CD14-positive monocyte (primary cell): ENCODE measurements at regions of chr18 and their contacts with region 1.

Region 1: GRCh38 chr18:3012964-3013804 is at the start of gene LPIN2:
- DNase-seq: peak; percentile 95 to 97 (median 96)
- H3K4me3 ChIP-seq: peak within 1 kb of the TSS; percentile 53 to 85 (median 73)
- H3K4me3 Mint-ChIP-seq: peak within 1 kb of the TSS; percentile 91 to 96
- H3K27ac ChIP-seq: peak within 1 kb of the TSS; percentile 76 to 88
- H3K27ac Mint-ChIP-seq: peak within 1 kb of the TSS; percentile 88 to 94 (median 93)
- H3K4me1 ChIP-seq: peaks cover 80 to 93% of the 10 kb centered on the region in 2 donors
- H3K4me1 Mint-ChIP-seq: peaks cover 83% of the 10 kb centered on the region
- H3K27me3 ChIP-seq: no peaks in the 10 kb centered on the region
- H3K27me3 Mint-ChIP-seq: no peaks in the 10 kb centered on the region
- CTCF ChIP-seq: no peak
- polyA plus RNA-seq, gene LPIN2: 9.3 to 16.3 (median 10.3) TPM

Region 2: GRCh38 chr18:2480575-2480974 is 532.6 kb before region 1 on chr18:
- intact Hi-C with region 1: no loop called
- DNase-seq: no peak
- H3K4me3 ChIP-seq: no peak overlapping the region
- H3K4me3 Mint-ChIP-seq: no peak overlapping the region
- H3K27ac ChIP-seq: no peak overlapping the region
- H3K27ac Mint-ChIP-seq: no peak overlapping the region
- H3K4me1 ChIP-seq: no peaks in the 10 kb centered on the region
- H3K4me1 Mint-ChIP-seq: no peaks in the 10 kb centered on the region
- H3K27me3 ChIP-seq: peaks cover 2 to 3% of the 10 kb centered on the region in 2 donors
- H3K27me3 Mint-ChIP-seq: peaks cover 5 to 12% (median 10%) of the 10 kb centered on the region in 3 donors
- CTCF ChIP-seq: no peak

Region 3: DNA sequence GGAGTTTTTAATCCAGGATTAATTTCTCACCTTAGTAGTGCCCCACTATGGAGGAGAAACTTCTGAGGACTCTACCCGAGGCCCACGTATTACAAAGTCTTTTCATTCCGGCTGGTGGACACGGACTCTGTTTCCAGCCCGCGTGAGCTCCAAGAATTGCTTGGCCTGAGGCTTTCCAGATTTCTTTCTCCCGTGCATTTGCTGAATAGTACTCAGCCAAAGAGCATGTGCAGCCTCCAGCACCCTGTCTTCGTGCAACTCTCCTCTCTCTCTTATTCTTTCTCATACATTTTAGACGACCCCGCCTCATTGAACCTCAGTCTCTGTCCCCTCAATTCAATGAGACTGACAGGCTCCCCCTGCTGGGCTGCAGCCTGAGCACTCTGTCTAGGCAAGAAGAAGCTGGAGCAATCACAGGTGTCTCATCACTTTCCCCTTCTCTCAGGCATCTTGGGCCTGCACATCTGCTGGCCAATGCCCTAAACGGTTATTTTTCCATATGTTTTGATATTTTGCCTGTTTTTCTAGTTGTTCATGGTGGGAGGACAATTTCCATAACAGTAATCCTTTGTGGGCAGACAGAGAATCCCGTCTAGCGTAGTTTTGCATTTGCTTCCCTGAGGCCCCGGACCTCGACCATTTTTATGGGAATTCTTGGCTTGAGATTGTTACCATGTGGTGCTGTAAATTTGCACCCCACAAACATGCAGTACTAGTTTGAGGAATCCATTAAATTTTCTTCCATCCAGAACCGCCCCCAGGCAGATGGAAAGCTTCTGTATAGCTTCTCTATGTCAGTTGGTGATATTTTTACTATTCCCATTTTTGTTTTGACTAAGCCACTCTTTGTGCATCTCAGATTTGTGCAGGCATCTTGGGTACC is 49.9 kb after region 1 on chr18:
- intact Hi-C with region 1: no loop called
- DNase-seq: peak; percentile 22 to 57 (median 45)
- H3K4me3 ChIP-seq: no peak overlapping the region
- H3K4me3 Mint-ChIP-seq: peak overlapping the region in 1 of 2 donors; percentile 70
- H3K27ac ChIP-seq: no peak overlapping the region
- H3K27ac Mint-ChIP-seq: no peak overlapping the region
- H3K4me1 ChIP-seq: no peaks in the 10 kb centered on the region
- H3K4me1 Mint-ChIP-seq: peaks cover 40% of the 10 kb centered on the region
- H3K27me3 ChIP-seq: no peaks in the 10 kb centered on the region
- H3K27me3 Mint-ChIP-seq: no peaks in the 10 kb centered on the region
- CTCF ChIP-seq: peak; percentile 78

Region 4: DNA sequence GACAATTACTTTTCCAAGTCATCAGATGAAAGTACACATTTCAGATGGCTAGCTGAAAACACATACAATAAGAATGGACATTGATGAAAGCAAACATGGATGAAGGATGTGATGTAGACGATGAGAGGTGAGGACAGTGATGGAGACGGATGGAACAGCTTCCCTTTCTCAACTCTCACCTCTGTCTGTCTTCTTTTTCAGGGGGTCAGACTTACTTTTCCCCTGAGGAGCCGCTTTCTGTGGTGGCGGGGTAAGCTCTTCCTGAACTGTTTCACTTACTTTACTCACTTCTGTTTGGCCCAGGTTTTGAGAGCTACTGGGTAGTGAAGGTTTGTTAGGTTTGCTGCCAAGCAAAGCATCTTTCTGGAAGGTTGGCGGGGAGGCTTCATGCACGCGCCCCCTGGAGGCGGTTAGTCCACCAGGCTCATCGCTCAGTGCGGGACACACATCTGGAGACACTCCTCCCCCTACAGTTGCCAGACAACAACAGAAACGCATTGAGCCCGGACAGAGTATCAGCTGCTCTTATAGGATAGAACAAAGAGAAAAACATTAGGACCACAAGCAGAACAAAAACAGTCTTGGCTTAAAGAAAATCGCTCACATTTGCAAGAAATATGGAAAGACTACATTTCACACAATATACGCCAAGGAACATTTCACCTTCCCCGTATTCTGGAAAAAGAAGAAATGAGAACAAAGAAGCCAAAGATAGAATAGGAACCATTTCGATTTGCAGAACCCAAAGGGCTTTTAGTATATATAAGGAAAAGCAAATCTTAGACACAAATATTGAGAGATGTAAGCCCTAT is 116.1 kb after region 1 on chr18:
- intact Hi-C with region 1: loop called in 1 of 2 experiments (anchors 10 kb)
- DNase-seq: peak; percentile 56 to 72 (median 69)
- H3K4me3 ChIP-seq: peak overlapping the region in 1 of 3 experiments; percentile 39
- H3K4me3 Mint-ChIP-seq: peak overlapping the region; percentile 65 to 79
- H3K27ac ChIP-seq: no peak overlapping the region
- H3K27ac Mint-ChIP-seq: peak overlapping the region in 1 of 7 donors; percentile 33
- H3K4me1 ChIP-seq: no peaks in the 10 kb centered on the region
- H3K4me1 Mint-ChIP-seq: peaks cover 7% of the 10 kb centered on the region
- H3K27me3 ChIP-seq: no peaks in the 10 kb centered on the region
- H3K27me3 Mint-ChIP-seq: peaks cover 0 to 2% (median 0%) of the 10 kb centered on the region in 3 donors
- CTCF ChIP-seq: peak; percentile 91

Region 5: DNA sequence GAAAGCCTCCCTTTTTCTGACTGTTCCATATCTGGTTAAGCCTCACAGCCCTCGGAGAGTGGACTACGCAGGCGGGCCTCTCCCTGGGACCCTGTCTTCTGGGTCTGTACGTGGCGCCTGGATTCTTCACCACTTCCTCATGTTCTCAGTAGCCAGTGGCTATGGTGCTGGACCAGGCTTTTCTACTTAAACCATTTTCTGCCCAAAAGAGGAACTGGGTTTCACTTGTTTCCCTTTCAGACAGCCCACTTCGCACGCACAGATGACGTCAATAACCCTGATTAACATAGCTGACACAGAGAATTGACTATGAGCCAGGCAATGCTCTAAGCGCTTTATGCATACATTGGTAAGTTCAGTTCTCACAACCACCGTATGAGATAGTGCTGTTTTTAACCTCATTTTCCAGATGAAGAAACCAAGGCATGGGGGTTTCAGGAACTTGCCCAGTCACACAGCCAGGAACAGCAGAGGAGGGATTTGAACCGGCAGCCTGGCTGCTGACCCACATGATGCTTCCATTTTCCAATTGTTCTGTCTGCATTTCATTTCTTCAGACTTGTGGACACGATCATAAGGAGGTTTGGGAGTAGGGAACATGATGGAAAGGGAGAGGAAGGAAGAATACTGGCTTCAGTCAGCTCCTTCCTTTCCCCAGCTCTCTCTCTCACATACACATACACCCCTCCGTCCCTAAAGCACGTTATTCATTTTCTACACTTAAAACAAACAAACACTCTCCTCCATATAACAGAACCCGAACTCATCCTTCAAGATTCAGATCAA is 164.9 kb after region 1 on chr18:
- intact Hi-C with region 1: loop called in 1 of 2 experiments (anchors 10 kb)
- DNase-seq: peak; percentile 99 to 100 (median 100)
- H3K4me3 ChIP-seq: peak overlapping the region in 1 of 3 experiments; percentile 21
- H3K4me3 Mint-ChIP-seq: peak overlapping the region; percentile 43 to 75
- H3K27ac ChIP-seq: peak overlapping the region; percentile 86 to 94
- H3K27ac Mint-ChIP-seq: peak overlapping the region; percentile 97 to 99 (median 98)
- H3K4me1 ChIP-seq: peaks cover 17 to 21% of the 10 kb centered on the region in 2 donors
- H3K4me1 Mint-ChIP-seq: peaks cover 18% of the 10 kb centered on the region
- H3K27me3 ChIP-seq: no peaks in the 10 kb centered on the region
- H3K27me3 Mint-ChIP-seq: no peaks in the 10 kb centered on the region
- CTCF ChIP-seq: no peak